RWPE1 (cell line): ENCODE measurements at regions of chr12 and their contacts with region 1.

Region 1: GRCh38 chr12:93002293-93003054 is 73.4 kb upstream of the EEA1 start:
- DNase-seq: no peak
- H3K27ac ChIP-seq: no peak overlapping the region
- CTCF ChIP-seq: no peak

Region 2: GRCh38 chr12:92529944-92530343 is 472.5 kb before region 1 on chr12:
- CTCF ChIA-PET with region 1: no interaction called
- POLR2A ChIA-PET with region 1: interaction called, 13 read pairs
- DNase-seq: no peak
- H3K27ac ChIP-seq: no peak overlapping the region
- CTCF ChIP-seq: no peak

Region 3: DNA sequence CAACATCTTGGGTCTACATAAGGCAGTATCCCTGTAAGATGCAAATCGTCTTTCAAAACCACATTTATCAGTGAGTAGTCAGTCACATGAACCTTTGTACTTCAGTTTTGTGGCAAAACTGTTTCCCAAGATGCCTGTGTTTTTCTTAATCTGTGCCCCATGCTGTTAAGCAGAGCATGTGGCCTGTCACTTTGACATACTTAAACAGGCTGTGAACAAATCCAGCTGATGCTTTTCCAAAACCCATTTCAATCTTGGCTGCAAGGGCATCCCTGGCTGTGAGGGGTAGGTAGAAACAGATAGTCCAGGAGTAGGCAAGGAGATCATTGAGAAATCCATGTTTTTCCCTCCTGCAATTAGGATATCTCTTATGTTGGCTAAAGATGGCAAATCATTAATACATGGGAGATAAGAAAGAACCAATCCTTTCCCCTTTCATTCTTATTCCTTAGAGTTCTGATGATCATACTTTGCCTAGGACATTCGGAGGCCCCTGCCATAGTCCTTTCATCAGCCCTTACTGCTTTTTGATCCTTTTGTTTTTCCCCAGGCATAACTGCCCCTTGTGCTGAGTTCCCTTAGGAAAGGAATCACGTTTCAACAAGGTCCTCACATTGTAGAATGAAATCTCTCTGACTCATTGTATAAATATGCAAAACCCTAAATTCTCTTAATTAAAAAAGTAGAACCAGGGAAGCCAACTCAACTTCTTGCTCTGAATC is 47.7 kb after region 1 on chr12:
- CTCF ChIA-PET with region 1: no interaction called
- POLR2A ChIA-PET with region 1: no interaction called
- DNase-seq: peak; percentile 14
- H3K27ac ChIP-seq: no peak overlapping the region
- CTCF ChIP-seq: no peak